Calu3 (cell line): ENCODE measurements at regions of chr5 and their contacts with region 1.

Region 1: DNA sequence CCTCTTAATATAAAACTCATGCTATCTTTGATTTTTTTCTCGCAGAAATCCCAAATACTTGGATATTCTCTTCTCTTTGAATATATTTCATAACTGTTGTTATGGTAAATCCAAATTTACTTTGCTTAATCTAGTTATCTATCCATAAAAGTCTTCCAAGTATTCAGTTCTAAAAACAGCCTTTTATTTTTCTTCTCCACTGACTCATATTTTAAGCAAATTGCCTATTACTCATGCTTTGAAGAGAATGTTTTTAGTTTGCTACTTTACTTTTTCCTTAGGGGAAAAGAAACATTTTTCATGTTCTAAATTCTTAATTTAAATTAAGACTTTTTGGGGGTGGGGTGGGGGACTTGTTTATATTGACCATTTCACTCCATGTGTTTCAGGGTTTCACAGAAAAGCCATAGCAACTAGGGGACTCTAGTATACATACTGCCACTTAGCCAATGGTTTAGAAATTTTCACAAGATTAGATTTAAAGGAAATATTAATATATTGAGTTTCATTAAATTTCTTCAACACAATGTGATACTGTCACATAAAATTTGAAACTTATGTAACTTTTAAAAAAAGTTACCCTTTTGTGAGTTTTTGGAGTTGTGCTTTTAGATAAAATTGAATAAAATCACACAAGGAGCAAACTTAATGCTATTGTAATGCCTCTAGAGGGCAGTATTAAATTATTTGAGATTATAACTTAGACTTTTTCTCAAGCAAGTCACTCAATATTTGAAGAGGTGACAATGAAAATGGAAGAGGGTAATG is 545.8 kb upstream of the ARRDC3 start:
- DNase-seq: no peak
- H3K4me3 Mint-ChIP-seq: no peak overlapping the region
- H3K27ac Mint-ChIP-seq: no peak overlapping the region
- H3K4me1 Mint-ChIP-seq: no peaks in the 10 kb centered on the region
- H3K27me3 Mint-ChIP-seq: no peaks in the 10 kb centered on the region
- CTCF ChIP-seq: peak; percentile 39

Region 2: DNA sequence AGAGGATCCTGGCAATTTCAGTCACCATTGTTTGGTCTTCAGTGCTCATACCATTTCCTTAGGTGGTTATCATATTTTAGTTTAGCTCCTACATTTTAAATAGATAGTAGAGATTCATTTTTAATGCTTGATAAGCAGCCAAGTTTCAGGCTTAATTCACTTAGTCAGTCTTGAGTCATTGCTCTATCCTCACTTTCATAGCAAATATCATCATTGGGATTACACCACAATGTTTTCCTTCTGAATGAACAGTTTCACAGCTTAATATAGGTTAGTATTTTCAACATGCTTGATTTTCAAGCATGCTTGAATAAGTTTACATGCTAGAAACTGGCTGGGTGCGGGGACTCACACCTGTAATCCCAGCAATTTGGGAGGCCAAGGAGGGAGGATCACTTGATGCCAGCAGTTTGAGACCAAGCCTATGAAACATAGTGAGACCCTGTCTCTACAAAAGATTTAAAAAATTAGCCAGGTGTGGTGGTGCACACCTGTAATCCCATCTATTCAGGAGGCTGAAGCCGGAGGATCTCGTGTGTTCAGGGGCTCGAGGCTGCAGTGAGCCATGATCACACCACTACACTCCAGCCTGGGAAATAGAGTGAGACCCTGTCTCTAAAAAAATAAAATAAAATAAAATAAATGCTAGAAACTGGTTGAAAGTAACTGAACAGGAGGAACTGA is 1030.5 kb before region 1 on chr5:
- CTCF ChIA-PET with region 1: no interaction called
- intact Hi-C with region 1: no loop called
- DNase-seq: no peak
- H3K4me3 Mint-ChIP-seq: no peak overlapping the region
- H3K27ac Mint-ChIP-seq: no peak overlapping the region
- H3K4me1 Mint-ChIP-seq: peaks cover 30% of the 10 kb centered on the region
- H3K27me3 Mint-ChIP-seq: no peaks in the 10 kb centered on the region
- CTCF ChIP-seq: no peak

Region 3: GRCh38 chr5:91499943-91500531 is 428.9 kb before region 1 on chr5:
- CTCF ChIA-PET with region 1: no interaction called
- intact Hi-C with region 1: loop called (anchors 5 kb)
- DNase-seq: peak; percentile 7
- H3K4me3 Mint-ChIP-seq: no peak overlapping the region
- H3K27ac Mint-ChIP-seq: no peak overlapping the region
- H3K4me1 Mint-ChIP-seq: no peaks in the 10 kb centered on the region
- H3K27me3 Mint-ChIP-seq: no peaks in the 10 kb centered on the region
- CTCF ChIP-seq: peak; percentile 65

Region 4: DNA sequence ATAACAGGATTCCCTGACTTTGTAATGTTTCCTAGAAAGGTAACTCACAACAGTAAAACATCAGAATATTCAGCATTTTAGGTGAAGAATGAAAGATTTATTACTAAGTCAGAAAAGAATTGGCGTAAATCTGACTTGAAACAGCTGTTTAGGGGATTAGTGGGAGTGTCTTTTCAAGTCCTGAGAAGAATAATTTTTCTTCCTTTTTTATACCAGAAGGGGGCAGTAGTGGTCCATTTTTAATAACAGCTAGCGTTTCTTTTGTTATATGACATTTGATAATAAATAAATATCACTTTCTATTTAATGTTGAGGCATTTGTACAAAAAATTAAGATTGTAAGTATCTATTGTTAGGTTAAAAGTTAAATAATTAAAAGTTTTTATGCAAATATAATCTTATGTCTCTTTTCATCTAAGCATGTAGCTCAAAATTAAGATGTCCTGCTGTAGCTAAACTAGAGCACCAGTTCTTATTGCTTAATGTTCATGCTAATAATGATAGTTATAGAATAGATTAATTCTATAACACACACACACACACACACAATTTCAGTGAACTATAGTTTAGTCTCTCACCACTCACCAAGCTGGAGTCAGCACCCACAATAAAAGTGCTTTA is 287.1 kb before region 1 on chr5:
- CTCF ChIA-PET with region 1: interaction called, 5 read pairs
- intact Hi-C with region 1: loop called (anchors 5 kb)
- DNase-seq: no peak
- H3K4me3 Mint-ChIP-seq: no peak overlapping the region
- H3K27ac Mint-ChIP-seq: no peak overlapping the region
- H3K4me1 Mint-ChIP-seq: no peaks in the 10 kb centered on the region
- H3K27me3 Mint-ChIP-seq: no peaks in the 10 kb centered on the region
- CTCF ChIP-seq: peak; percentile 70

Region 5: GRCh38 chr5:92222449-92222848 is 293.5 kb after region 1 on chr5:
- CTCF ChIA-PET with region 1: no interaction called
- intact Hi-C with region 1: loop called (anchors 2 kb)
- DNase-seq: peak; percentile 11
- H3K4me3 Mint-ChIP-seq: no peak overlapping the region
- H3K27ac Mint-ChIP-seq: no peak overlapping the region
- H3K4me1 Mint-ChIP-seq: no peaks in the 10 kb centered on the region
- H3K27me3 Mint-ChIP-seq: no peaks in the 10 kb centered on the region
- CTCF ChIP-seq: no peak

Region 6: GRCh38 chr5:92662741-92663140 is 733.8 kb after region 1 on chr5:
- CTCF ChIA-PET with region 1: no interaction called
- intact Hi-C with region 1: no loop called
- DNase-seq: no peak
- H3K4me3 Mint-ChIP-seq: no peak overlapping the region
- H3K27ac Mint-ChIP-seq: no peak overlapping the region
- H3K4me1 Mint-ChIP-seq: no peaks in the 10 kb centered on the region
- H3K27me3 Mint-ChIP-seq: no peaks in the 10 kb centered on the region
- CTCF ChIP-seq: no peak